ENCODE measurements at regions of chr6 and their contacts with region 1.

Region 1: GRCh38 chr6:159134701-159135364 is 34.4 kb upstream of the FNDC1 start:
- DNase-seq: peak; percentile 73
- H3K4me3 Mint-ChIP-seq: no peak overlapping the region
- H3K27ac Mint-ChIP-seq: no peak overlapping the region
- H3K4me1 Mint-ChIP-seq: peaks cover 5% of the 10 kb centered on the region
- H3K27me3 Mint-ChIP-seq: peaks cover 42% of the 10 kb centered on the region
- CTCF ChIP-seq: peak; percentile 95

Region 2: DNA sequence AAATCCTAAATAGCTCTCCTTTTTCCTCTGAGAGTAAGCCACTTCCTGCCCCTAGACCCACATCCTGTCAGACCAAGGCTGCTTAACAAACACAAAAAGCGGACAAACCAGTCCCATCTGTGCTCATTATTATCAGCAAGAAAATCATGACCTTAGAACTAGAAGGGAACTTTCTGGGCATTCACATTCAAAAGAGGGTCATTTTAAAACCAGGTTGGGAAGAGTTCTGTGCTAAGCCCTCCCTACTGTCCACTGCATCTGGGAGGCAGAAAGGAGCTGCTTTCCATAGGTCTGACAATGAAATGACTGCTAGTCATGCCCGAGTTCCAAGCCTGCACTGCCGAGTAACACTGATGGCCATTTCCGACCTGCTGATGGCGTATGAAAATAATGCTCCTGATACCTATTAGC is 331.1 kb before region 1 on chr6:
- CTCF ChIA-PET with region 1: no interaction called
- POLR2A ChIA-PET with region 1: no interaction called
- intact Hi-C with region 1: no loop called
- DNase-seq: no peak
- H3K4me3 Mint-ChIP-seq: no peak overlapping the region
- H3K27ac Mint-ChIP-seq: peak overlapping the region; percentile 82
- H3K4me1 Mint-ChIP-seq: peaks cover 42% of the 10 kb centered on the region
- H3K27me3 Mint-ChIP-seq: no peaks in the 10 kb centered on the region
- CTCF ChIP-seq: no peak

Region 3: GRCh38 chr6:159008656-159009288 is 126.1 kb before region 1 on chr6:
- CTCF ChIA-PET with region 1: interaction called, 182 read pairs
- POLR2A ChIA-PET with region 1: interaction called, 10 read pairs
- intact Hi-C with region 1: loop called (anchors 1 kb)
- DNase-seq: peak; percentile 53
- H3K4me3 Mint-ChIP-seq: no peak overlapping the region
- H3K27ac Mint-ChIP-seq: no peak overlapping the region
- H3K4me1 Mint-ChIP-seq: no peaks in the 10 kb centered on the region
- H3K27me3 Mint-ChIP-seq: no peaks in the 10 kb centered on the region
- CTCF ChIP-seq: peak; percentile 42

Region 4: DNA sequence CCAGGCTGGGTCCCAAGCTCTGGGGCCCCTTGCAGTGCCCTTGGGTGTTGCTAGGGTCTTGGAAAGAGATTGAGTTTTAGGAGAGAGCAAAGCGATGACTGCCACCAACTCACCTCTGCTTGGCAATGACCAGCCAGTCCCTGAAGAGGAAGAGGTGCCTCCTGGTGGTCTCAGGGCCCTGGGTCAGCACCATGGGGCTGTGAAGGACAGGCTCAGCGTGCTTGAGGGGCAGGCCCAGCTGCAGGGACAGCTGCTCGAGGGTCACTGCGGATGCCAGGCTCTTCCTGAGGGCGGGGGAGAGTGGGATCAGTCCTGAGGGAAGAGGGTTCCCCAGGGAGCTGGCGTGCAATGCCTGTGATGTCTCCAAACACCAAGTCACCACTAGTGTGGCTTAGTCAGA is 39.2 kb before region 1 on chr6:
- CTCF ChIA-PET with region 1: interaction called, 12 read pairs
- POLR2A ChIA-PET with region 1: no interaction called
- intact Hi-C with region 1: no loop called
- DNase-seq: no peak
- H3K4me3 Mint-ChIP-seq: no peak overlapping the region
- H3K27ac Mint-ChIP-seq: no peak overlapping the region
- H3K4me1 Mint-ChIP-seq: no peaks in the 10 kb centered on the region
- H3K27me3 Mint-ChIP-seq: no peaks in the 10 kb centered on the region
- CTCF ChIP-seq: no peak

Region 5: GRCh38 chr6:159110013-159110412 is 24.8 kb before region 1 on chr6:
- CTCF ChIA-PET with region 1: interaction called, 38 read pairs
- POLR2A ChIA-PET with region 1: no interaction called
- intact Hi-C with region 1: no loop called
- DNase-seq: peak; percentile 58
- H3K4me3 Mint-ChIP-seq: no peak overlapping the region
- H3K27ac Mint-ChIP-seq: no peak overlapping the region
- H3K4me1 Mint-ChIP-seq: no peaks in the 10 kb centered on the region
- H3K27me3 Mint-ChIP-seq: no peaks in the 10 kb centered on the region
- CTCF ChIP-seq: peak; percentile 63

Region 6: DNA sequence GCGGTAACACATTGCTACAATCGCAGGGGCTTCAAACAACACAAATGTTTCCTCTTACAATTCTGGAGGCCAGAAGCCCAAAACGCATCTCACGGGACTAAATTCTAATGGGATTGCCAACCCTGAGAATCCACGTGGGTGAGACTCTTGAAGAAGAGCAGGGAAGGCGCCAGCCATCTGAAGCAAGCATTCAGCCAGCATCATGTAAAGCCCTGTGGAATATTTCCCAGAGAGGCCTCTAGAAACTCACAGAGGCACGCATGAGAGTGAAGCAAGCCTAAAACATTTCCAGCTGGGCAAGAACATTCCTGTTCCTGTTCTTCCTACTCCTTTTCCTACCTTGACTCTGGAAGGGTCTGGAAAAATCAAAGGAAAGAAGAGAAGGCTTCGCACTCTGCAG is 14.8 kb after region 1 on chr6:
- CTCF ChIA-PET with region 1: interaction called, 27 read pairs
- POLR2A ChIA-PET with region 1: no interaction called
- intact Hi-C with region 1: no loop called
- DNase-seq: no peak
- H3K4me3 Mint-ChIP-seq: no peak overlapping the region
- H3K27ac Mint-ChIP-seq: no peak overlapping the region
- H3K4me1 Mint-ChIP-seq: peaks cover 5% of the 10 kb centered on the region
- H3K27me3 Mint-ChIP-seq: peaks cover 18% of the 10 kb centered on the region
- CTCF ChIP-seq: no peak

Measured in MCF 10A (cell line).